BJ (cell line): ENCODE measurements at regions of chr22 and their contacts with region 1.

Region 1: GRCh38 chr22:22959147-22959827 is 71.7 kb downstream of the IGLL5 start:
- DNase-seq: no peak
- H3K4me3 ChIP-seq: no peak overlapping the region
- H3K27me3 ChIP-seq: peaks cover 3% of the 10 kb centered on the region
- CTCF ChIP-seq: peak; percentile 74

Region 2: DNA sequence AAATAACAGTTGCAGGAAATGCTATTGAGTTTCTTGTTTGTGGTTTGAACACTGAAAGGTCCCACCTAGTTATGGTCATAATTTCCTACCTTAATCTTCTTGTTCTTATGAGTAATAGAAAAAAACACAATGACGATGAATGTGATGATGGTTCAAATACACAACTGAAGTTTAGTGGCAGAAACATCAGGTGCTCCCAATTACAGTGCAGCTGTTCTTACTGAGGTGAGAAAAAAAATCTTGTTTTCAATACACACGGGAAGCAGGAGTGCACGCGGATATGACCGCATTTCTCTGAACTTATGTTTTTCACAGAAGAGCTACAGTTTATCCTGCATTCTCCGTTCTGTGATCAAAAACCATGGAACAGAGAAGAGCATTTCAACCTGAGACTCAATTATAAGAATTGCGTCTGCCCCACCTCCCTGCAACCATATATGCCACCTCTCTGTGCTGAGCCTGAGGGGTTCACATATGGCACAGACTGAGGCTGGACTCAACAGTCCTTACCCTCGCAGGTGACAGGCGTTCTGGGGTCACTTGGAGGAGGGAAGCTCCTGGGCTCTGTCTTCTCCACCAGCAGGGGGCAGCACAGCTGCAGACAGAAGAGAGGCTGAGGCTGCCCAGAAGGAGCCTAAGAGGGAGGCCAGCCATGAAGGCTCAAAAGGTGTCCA is 171.4 kb before region 1 on chr22:
- CTCF ChIA-PET with region 1: interaction called, 14 read pairs
- POLR2A ChIA-PET with region 1: no interaction called
- DNase-seq: no peak
- H3K4me3 ChIP-seq: no peak overlapping the region
- H3K27me3 ChIP-seq: peaks cover 1% of the 10 kb centered on the region; the same call in 1 of the 2 replicates
- CTCF ChIP-seq: peak; percentile 87

Region 3: GRCh38 chr22:22848364-22848866 is 110.9 kb before region 1 on chr22:
- CTCF ChIA-PET with region 1: interaction called, 231 read pairs
- POLR2A ChIA-PET with region 1: no interaction called
- DNase-seq: no peak
- H3K4me3 ChIP-seq: no peak overlapping the region
- H3K27me3 ChIP-seq: peaks cover 1% of the 10 kb centered on the region; the same call in 1 of the 2 replicates
- CTCF ChIP-seq: peak; percentile 97

Region 4: GRCh38 chr22:22942511-22943329 is 16.6 kb before region 1 on chr22:
- CTCF ChIA-PET with region 1: interaction called, 51 read pairs
- POLR2A ChIA-PET with region 1: no interaction called
- DNase-seq: no peak
- H3K4me3 ChIP-seq: no peak overlapping the region
- H3K27me3 ChIP-seq: peaks cover 2% of the 10 kb centered on the region
- CTCF ChIP-seq: peak; percentile 66

Region 5: DNA sequence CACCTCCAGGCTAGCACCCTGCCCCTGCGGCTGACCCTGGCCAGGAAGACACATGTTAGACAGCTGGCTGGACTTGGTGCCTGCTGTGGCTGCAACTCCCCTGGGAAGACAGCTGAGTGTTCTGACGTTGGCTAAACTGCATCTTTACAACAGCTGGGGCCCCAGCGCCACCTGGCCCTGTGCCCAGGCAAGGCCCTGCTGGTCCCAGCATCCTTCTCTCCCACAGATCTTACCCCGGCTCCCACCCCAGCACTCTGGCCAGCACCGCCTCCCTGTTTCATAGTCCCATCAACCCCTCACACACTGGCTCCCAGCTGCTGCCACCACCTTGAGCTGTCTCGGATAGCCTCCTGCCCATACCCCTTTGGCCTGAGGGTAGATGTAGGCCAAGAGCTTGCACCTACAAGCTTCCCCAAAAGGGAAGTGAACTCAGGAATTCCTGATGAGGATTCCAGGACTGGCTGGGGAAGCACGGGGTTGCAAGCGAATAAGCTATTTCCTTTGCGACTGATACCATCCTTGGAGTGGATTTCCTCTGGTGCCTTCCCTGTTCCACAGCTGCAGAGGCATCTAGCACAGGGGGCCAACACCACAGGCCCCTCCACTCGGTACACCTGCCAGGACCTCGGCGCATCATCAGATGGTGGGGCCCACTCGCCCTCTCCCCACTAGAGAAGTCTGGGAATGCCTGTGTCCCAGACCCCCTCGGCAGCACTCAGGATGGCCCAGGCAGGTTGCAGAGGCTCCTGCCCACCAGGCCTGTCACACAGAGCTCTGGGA is 154.0 kb after region 1 on chr22:
- CTCF ChIA-PET with region 1: interaction called, 23 read pairs
- POLR2A ChIA-PET with region 1: no interaction called
- DNase-seq: no peak
- H3K4me3 ChIP-seq: no peak overlapping the region
- H3K27me3 ChIP-seq: no peaks in the 10 kb centered on the region
- CTCF ChIP-seq: no peak

Region 6: DNA sequence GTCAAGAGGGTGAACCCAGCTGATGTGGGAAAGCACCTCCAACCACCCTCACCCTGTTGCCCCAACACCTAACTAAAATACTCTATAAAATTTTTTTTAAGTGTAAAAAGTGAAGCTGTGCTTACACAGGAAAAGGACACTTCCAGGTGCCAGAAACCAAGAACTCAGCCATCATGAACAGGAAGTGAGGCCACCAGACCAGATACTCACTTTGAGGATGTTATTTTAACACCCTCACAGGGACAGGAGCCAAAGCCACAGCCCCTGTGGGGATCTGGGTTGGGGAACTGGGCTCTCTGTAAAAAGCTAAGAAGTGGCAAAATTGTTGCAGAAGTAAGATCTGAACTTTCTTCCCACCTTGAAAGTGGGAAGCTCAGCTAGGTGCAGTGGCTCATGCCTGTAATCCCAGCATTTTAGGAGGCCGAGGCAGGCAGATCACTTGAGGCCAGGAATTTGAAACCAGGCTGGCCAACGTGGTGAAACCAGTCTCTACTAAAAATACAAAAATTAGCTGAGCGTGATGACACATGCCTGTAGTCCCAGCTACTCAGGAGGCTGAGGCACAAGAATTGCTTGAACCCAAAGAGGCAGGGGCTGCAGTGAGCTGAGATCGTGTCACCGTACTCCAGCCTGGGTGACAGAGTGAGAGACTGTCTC is 178.7 kb after region 1 on chr22:
- CTCF ChIA-PET with region 1: interaction called, 425 read pairs
- POLR2A ChIA-PET with region 1: no interaction called
- DNase-seq: no peak
- H3K4me3 ChIP-seq: no peak overlapping the region
- H3K27me3 ChIP-seq: 0 out of 2 replicates have a peak, but pooled peaks cover 1% of the 10 kb centered on the region
- CTCF ChIP-seq: no peak

Region 7: DNA sequence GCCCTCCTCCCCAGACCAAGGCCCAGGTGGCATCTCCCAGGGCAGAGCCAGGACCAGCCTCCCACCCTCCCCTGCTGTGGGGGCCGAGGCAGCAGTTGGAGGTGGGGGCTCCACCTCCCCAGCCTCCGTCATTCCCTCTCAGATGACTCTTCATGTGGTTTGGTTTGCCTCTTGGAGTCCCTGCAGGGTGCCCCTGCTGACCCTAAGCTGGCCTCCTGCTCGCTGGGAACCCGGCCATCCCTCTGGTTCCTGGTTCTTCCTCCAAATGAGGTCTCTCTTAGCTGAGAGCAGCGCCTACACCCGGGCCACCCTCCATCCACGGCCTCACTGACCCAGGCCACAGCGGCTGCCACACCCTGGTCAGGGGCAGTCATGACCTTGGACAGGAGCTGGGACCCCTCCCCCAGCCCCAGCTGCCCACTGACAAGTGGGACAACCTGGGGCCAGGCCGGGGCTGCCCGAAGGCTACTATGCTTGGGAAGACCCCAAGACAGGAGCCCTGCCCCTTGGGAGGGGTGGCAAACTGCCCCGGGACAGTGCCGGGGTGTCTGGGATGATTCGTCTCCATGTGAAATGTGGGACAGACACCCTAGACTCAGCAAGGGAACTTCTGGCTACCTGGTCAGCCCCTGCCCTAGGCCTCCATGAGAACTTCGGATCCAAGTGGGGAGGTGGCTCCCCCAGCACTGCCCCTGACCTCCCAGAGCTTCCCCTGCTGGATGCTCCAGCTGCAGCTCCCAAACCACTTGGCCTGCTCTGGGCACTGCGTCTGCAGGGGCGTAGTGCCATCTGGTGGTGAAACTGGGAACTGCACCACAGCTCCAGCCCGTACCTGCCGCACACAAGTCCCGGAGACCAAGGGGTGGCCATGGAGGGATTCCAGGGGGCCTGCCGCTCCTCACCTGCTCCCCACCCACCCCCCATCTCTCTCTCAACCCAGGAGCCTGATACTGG is 426.3 kb after region 1 on chr22:
- CTCF ChIA-PET with region 1: interaction called, 23 read pairs
- POLR2A ChIA-PET with region 1: no interaction called
- DNase-seq: no peak
- H3K4me3 ChIP-seq: no peak overlapping the region
- H3K27me3 ChIP-seq: peaks cover 2% of the 10 kb centered on the region; the same call in 1 of the 2 replicates
- CTCF ChIP-seq: peak; percentile 99